ENCODE measurements at regions of chr9 and their contacts with region 1.

Region 1: DNA sequence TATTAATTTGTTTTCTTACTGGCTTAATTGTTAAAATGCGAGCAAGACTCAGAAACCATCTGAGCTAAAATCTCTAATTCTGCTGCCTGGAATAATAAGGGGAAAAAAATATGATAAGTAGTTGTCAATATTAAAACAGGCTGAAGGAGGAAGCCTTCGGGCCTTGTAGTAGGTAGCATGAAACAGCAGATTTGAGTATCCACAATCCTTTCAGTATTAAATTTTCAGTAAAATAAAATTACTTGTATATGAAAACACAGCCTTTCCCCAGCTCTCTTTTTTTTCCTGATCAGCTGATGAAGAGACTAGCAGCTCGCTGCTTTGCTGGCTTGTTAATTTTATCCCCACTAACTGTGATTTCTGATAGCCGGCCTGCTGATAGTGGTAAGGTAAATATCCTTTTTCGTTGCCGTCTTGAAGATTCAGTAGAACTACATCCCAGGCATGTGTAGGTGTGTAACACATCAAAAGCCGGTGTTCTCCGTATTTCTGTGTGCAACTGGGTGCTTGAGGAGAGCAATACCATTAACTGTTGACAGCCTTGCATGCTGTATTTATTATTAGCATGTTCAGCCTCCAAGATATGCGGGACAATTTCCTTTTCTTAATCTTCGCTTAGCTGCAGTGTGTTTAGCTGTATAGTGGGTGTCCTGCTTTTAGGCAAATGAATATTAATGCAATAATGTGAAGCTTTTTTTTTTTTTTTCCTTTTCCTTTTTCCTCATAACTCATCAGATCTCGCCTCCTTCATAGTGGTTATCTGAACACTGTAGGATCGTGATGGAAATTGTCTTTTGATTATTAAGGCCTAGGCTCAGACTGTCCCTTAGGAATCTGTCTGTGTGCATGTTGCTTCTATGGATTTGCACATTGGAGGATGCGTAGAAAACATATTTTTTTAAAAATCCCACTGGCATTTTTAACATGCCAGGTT is 144.6 kb downstream of the SMARCA2 start:
- DNase-seq: no peak
- ATAC-seq: peak; percentile 30

Region 2: GRCh38 chr9:2093920-2094597 is 65.7 kb before region 1 on chr9:
- intact Hi-C with region 1: no loop called
- DNase-seq: no peak
- ATAC-seq: peak; percentile 62

Region 3: DNA sequence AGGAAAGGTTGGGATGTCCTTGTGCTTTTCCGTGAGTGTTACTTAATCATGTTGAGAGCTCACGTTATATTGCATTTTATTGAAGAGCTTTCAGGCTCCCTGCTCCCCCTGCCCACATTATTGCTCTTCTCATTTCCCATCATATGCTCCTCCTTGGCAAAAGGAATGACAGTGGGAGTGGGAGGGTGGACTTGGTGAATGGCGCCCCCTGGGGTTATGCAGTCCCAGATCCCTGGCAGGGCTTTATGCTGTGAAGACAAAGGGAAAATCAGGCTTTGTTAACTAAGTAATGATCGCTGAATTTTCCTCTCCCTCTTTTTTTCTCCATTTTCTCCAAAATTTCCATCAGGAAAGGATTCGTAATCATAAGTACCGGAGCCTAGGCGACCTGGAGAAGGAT is 22.0 kb after region 1 on chr9:
- intact Hi-C with region 1: loop called (anchors 1 kb)
- DNase-seq: peak; percentile 45
- ATAC-seq: no peak

Measured in Right ventricle myocardium inferior (tissue), 1 donor.